ENCODE measurements at regions of chr20 and their contacts with region 1.

Region 1: GRCh38 chr20:44861531-44862006 is 23.9 kb upstream of the YWHAB start:
- DNase-seq: no peak
- ATAC-seq: no peak
- H3K4me3 ChIP-seq: no peak overlapping the region
- H3K27ac ChIP-seq: no peak overlapping the region
- H3K4me1 ChIP-seq: peaks cover 7% of the 10 kb centered on the region
- H3K27me3 ChIP-seq: peaks cover 1 to 17% of the 10 kb centered on the region in 2 experiments; a peak in 3 of 5 replicates
- CTCF ChIP-seq: no peak
- EP300 ChIP-seq: no peak
- POLR2A ChIP-seq: no peak
- RAD21 ChIP-seq: no peak

Region 2: DNA sequence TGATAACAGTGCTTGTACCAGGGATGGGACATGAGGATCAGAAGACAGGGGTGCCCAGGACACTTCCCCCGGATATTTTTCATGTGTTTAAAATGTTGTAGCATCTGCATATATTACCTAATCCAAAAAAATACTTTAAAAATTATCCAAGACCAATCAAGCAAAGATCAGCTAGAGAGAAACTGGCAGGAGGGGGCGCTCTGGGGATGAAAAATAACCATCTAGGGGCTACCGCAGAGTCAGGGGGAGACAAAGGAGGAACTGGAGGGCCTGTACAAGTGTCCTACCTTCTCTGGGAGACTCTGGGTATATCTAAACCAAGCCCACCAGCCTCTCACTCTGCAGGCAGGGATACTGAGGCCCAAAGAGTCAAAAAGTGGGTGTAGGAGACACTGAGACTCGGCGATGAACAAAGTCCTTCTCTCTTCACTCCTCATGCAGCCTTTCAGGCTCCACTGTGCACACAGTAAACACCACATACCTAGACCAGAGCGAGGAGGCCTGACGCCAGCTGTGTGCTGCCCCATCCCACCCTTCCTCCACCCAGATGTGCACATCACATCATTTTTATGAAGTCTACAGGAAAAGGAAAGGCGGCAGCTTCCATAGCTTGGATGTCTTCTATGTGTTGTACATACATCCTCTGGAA is 61.0 kb before region 1 on chr20:
- CTCF ChIA-PET with region 1: interaction called, 12 read pairs
- POLR2A ChIA-PET with region 1: no interaction called
- in situ Hi-C with region 1: loop called (anchors 5 kb)
- intact Hi-C with region 1: no loop called
- DNase-seq: peak; percentile 25
- ATAC-seq: peak; percentile 59
- H3K4me3 ChIP-seq: no peak overlapping the region
- H3K27ac ChIP-seq: no peak overlapping the region
- H3K4me1 ChIP-seq: 0 out of 2 replicates have a peak, but pooled peaks cover 6% of the 10 kb centered on the region
- H3K27me3 ChIP-seq: peaks cover 0 to 40% of the 10 kb centered on the region in 2 experiments; a peak in 2 of 5 replicates
- CTCF ChIP-seq: peak; percentile 46
- EP300 ChIP-seq: no peak
- POLR2A ChIP-seq: no peak
- RAD21 ChIP-seq: no peak